Naive thymus-derived CD4-positive, alpha-beta T cell (primary cell): ENCODE measurements at regions of chr11 and their contacts with region 1.

Region 1: GRCh38 chr11:131674051-131674755 is 303.8 kb downstream of the NTM start:
- DNase-seq: peak in 1 of 9 donors; percentile 60
- ATAC-seq: peak; percentile 72
- H3K4me3 ChIP-seq: no peak overlapping the region
- H3K4me3 Mint-ChIP-seq: no peak overlapping the region
- H3K27ac ChIP-seq: no peak overlapping the region
- H3K27ac Mint-ChIP-seq: no peak overlapping the region
- H3K4me1 ChIP-seq: no peaks in the 10 kb centered on the region
- H3K4me1 Mint-ChIP-seq: no peaks in the 10 kb centered on the region
- H3K27me3 ChIP-seq: no peaks in the 10 kb centered on the region
- H3K27me3 Mint-ChIP-seq: peaks cover 0 to 13% (median 0%) of the 10 kb centered on the region in 5 donors

Region 2: GRCh38 chr11:131154351-131154750 is 519.9 kb before region 1 on chr11:
- CTCF ChIA-PET with region 1: no interaction called
- POLR2A ChIA-PET with region 1: no interaction called
- intact Hi-C with region 1: no loop called
- DNase-seq: no peak
- ATAC-seq: no peak
- H3K4me3 ChIP-seq: no peak overlapping the region
- H3K4me3 Mint-ChIP-seq: no peak overlapping the region
- H3K27ac ChIP-seq: no peak overlapping the region
- H3K27ac Mint-ChIP-seq: no peak overlapping the region
- H3K4me1 ChIP-seq: no peaks in the 10 kb centered on the region
- H3K4me1 Mint-ChIP-seq: no peaks in the 10 kb centered on the region
- H3K27me3 ChIP-seq: no peaks in the 10 kb centered on the region
- H3K27me3 Mint-ChIP-seq: no peaks in the 10 kb centered on the region

Region 3: DNA sequence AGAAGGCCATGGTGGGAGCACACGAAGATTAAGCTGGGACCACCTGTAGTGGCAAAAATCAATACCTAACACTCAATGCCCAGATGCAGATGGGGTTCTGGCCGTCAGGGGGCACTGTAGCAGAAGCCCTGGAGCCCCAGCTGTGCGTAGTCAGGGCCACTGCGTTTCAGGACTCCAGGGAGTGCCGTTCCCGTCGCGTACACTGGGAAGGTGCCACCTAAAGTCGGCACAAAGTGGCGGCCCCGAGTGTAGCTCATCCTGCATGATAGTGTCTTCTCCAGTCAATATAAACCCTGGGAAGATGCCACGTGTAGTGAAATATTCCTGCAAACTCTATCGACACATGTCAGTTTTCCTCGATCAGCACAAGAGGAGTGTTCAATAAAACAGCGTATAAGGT is 427.5 kb before region 1 on chr11:
- CTCF ChIA-PET with region 1: no interaction called
- POLR2A ChIA-PET with region 1: no interaction called
- intact Hi-C with region 1: loop called in 1 of 2 experiments (anchors 5 kb)
- DNase-seq: no peak
- ATAC-seq: no peak
- H3K4me3 ChIP-seq: no peak overlapping the region
- H3K4me3 Mint-ChIP-seq: no peak overlapping the region
- H3K27ac ChIP-seq: no peak overlapping the region
- H3K27ac Mint-ChIP-seq: no peak overlapping the region
- H3K4me1 ChIP-seq: no peaks in the 10 kb centered on the region
- H3K4me1 Mint-ChIP-seq: no peaks in the 10 kb centered on the region
- H3K27me3 ChIP-seq: no peaks in the 10 kb centered on the region
- H3K27me3 Mint-ChIP-seq: peaks cover 20 to 47% (median 28%) of the 10 kb centered on the region in 5 donors